ENCODE measurements at regions of chr1 and their contacts with region 1.

Region 1: GRCh38 chr1:112395821-112396652 is at the start of gene CTTNBP2NL:
- DNase-seq: peak; percentile 88
- ATAC-seq: peak; percentile 96
- H3K4me3 ChIP-seq: peak within 1 kb of the TSS; percentile 60 to 98
- H3K27ac ChIP-seq: peak within 1 kb of the TSS; percentile 67
- H3K4me1 ChIP-seq: peaks cover 19 to 38% of the 10 kb centered on the region in 2 experiments
- H3K27me3 ChIP-seq: no peaks in the 10 kb centered on the region
- CTCF ChIP-seq: no peak
- POLR2A ChIP-seq: peak; percentile 32
- RAD21 ChIP-seq: no peak
- total RNA-seq, gene CTTNBP2NL: 18.0 TPM

Region 2: DNA sequence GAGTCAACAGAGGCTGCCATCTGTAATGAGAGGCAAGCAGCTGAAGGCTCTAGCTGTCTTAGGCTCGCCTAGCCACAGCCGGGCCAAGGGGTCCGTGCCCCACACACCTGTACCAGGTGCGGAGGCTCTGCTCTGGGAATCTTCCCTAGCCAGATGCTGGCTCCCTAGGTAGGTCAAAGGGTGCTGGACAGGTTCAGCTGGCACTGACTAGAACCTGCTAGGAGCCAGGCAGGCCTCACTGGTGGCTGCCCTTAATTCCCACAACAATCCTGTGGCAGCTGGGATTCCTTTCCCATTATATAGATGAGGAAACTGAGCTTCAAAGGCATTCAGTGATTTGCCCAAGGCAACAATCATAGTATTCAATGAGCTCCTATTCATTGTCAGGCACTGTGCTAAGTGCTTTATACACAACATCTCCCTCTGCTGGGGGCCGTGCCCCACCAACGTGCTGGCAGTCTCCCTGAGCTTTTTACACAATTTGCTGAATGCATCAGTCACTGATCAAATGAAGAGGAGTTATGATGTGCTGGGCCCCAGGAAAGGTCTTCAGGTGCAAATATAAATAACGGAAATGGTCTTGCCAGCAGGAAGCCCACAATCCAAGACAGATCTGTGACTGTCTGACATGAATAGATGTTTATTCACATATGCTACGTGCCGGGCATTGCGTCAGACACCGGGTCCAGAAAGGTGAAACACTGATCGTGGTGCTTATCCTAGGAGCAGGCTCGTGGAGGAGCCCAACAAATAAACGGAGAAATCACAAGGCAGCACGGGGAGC is 582.3 kb before region 1 on chr1:
- CTCF ChIA-PET with region 1: no interaction called
- POLR2A ChIA-PET with region 1: no interaction called
- RAD21 ChIA-PET with region 1: no interaction called
- intact Hi-C with region 1: no loop called
- DNase-seq: no peak
- ATAC-seq: peak; percentile 57
- H3K4me3 ChIP-seq: no peak overlapping the region
- H3K27ac ChIP-seq: no peak overlapping the region
- H3K4me1 ChIP-seq: no peaks in the 10 kb centered on the region
- H3K27me3 ChIP-seq: no peaks in the 10 kb centered on the region; the same call in 1 of the 2 replicates
- CTCF ChIP-seq: peak in 1 of 3 experiments; percentile 22; a peak in 1 of 6 replicates
- POLR2A ChIP-seq: no peak
- RAD21 ChIP-seq: no peak

Region 3: GRCh38 chr1:112466078-112466660 is 70.1 kb after region 1 on chr1:
- CTCF ChIA-PET with region 1: interaction called, 6 read pairs
- POLR2A ChIA-PET with region 1: interaction called, 3 read pairs
- RAD21 ChIA-PET with region 1: interaction called in 1 of 2 experiments, 4 read pairs
- intact Hi-C with region 1: loop called (anchors 1 kb)
- DNase-seq: peak; percentile 82
- ATAC-seq: peak; percentile 93
- H3K4me3 ChIP-seq: peak overlapping the region; percentile 19 to 26
- H3K27ac ChIP-seq: no peak overlapping the region
- H3K4me1 ChIP-seq: peaks cover 0 to 22% of the 10 kb centered on the region in 2 experiments; a peak in 2 of 4 replicates
- H3K27me3 ChIP-seq: no peaks in the 10 kb centered on the region
- CTCF ChIP-seq: peak; percentile 74 to 89 (median 80)
- POLR2A ChIP-seq: no peak
- RAD21 ChIP-seq: peak; percentile 90

Measured in HCT116 (cell line).